Activated CD4-positive, alpha-beta T cell treated with anti-CD3 and anti-CD28 coated beads for 36 hours (primary cell): ENCODE measurements at regions of chr6 and their contacts with region 1.

Region 1: DNA sequence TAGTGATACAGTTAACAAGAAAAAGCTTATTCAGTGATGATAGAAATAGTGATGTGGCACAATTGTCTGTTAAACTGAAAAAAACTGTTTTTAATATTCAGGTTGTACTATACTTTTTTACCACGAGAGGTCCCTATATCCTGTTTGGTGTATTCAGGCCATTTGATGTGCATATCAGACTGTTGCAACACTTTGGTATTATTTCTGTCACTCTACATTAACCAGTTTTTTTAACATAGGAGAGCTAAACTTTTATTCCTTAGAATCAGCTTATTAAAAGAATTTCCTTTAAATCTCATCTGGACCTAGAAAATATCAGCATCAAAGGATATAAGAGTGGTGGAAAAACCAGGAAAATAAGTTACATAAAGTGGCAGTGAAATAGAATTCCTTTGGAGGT is 36.8 kb downstream of the TSPYL4 start:
- DNase-seq: no peak
- ATAC-seq: peak; percentile 49
- H3K4me3 Mint-ChIP-seq: no peak overlapping the region
- H3K27ac Mint-ChIP-seq: no peak overlapping the region
- H3K4me1 Mint-ChIP-seq: peaks cover 5% of the 10 kb centered on the region
- H3K27me3 Mint-ChIP-seq: no peaks in the 10 kb centered on the region

Region 2: GRCh38 chr6:116060572-116061283 is 156.3 kb before region 1 on chr6 and contains the start of gene FRK:
- CTCF ChIA-PET with region 1: no interaction called
- POLR2A ChIA-PET with region 1: no interaction called
- intact Hi-C with region 1: no loop called
- DNase-seq: no peak
- ATAC-seq: no peak
- H3K4me3 Mint-ChIP-seq: no peak within 1 kb of the TSS
- H3K27ac Mint-ChIP-seq: no peak within 1 kb of the TSS
- H3K4me1 Mint-ChIP-seq: no peaks in the 10 kb centered on the region
- H3K27me3 Mint-ChIP-seq: peaks cover 4% of the 10 kb centered on the region
- total RNA-seq, gene FRK: 0.02 to 0.05 TPM

Region 3: GRCh38 chr6:116268589-116269293 is 51.7 kb after region 1 on chr6:
- CTCF ChIA-PET with region 1: interaction called, 6 read pairs
- POLR2A ChIA-PET with region 1: no interaction called
- intact Hi-C with region 1: loop called in 1 of 2 experiments (anchors 5 kb)
- DNase-seq: no peak
- ATAC-seq: peak; percentile 72
- H3K4me3 Mint-ChIP-seq: no peak overlapping the region
- H3K27ac Mint-ChIP-seq: no peak overlapping the region
- H3K4me1 Mint-ChIP-seq: peaks cover 28% of the 10 kb centered on the region
- H3K27me3 Mint-ChIP-seq: no peaks in the 10 kb centered on the region

Region 4: DNA sequence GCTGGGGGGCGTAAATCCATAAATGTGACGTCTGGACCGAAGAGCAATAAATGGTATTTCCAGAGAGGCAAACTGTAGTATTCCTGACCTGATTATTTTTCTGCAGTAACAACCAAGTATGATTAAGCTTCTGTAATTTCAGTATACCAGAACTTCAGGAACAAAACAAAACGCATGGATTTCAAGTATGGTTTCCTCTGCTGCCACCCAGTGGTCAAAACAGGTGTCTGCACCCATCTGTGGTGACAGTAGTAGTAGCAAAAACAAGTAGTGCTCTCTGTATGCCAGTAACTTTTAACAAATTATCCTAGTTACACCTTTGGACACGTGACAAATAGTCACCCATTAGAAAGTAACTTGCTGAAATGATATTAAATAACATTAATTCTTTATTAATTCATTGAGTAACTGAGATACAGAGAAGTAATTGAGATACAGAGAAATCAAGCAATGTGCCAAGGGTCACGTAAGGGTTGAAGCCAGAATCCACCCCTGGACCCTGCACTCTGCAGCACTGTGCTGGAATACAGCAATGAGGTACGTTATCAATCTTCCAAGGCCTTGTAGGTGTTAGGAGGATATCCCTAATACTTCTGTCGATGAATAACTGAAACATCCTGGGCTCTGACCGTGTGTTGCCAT is 344.4 kb after region 1 on chr6:
- CTCF ChIA-PET with region 1: interaction called, 9 read pairs
- POLR2A ChIA-PET with region 1: interaction called, 3 read pairs
- intact Hi-C with region 1: loop called (anchors 1 to 2 kb)
- DNase-seq: peak; percentile 79
- ATAC-seq: peak; percentile 87
- H3K4me3 Mint-ChIP-seq: no peak overlapping the region
- H3K27ac Mint-ChIP-seq: no peak overlapping the region
- H3K4me1 Mint-ChIP-seq: peaks cover 1% of the 10 kb centered on the region
- H3K27me3 Mint-ChIP-seq: peaks cover 11% of the 10 kb centered on the region

Region 5: DNA sequence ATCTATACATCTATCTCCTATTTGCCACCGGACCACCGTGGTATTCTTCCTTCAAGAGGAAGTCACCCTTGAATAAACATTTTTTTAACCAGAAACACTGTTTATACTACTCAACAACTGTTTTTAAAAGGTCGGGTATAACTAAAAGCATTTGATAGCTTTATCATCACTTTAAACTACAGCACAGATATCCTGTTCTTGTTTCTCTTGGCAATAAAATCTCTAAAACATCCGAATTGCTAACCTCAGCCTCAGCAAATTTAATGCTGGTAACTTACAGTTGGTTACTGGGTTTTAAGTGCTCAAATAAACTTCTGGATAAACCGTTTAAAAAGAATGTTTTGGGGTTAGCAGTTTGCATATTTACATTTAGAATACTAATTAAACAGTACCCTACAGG is 431.1 kb after region 1 on chr6:
- CTCF ChIA-PET with region 1: interaction called, 3 read pairs
- POLR2A ChIA-PET with region 1: no interaction called
- intact Hi-C with region 1: loop called in 1 of 2 experiments (anchors 2 kb)
- DNase-seq: no peak
- ATAC-seq: no peak
- H3K4me3 Mint-ChIP-seq: no peak overlapping the region
- H3K27ac Mint-ChIP-seq: no peak overlapping the region
- H3K4me1 Mint-ChIP-seq: peaks cover 6% of the 10 kb centered on the region
- H3K27me3 Mint-ChIP-seq: no peaks in the 10 kb centered on the region